BJ (cell line): ENCODE measurements at regions of chr19 and their contacts with region 1.

Region 1: GRCh38 chr19:55494172-55494761 is 6.0 kb downstream of the SSC5D start:
- DNase-seq: no peak
- H3K4me3 ChIP-seq: peak overlapping the region; percentile 39
- H3K27me3 ChIP-seq: no peaks in the 10 kb centered on the region
- CTCF ChIP-seq: no peak

Region 2: DNA sequence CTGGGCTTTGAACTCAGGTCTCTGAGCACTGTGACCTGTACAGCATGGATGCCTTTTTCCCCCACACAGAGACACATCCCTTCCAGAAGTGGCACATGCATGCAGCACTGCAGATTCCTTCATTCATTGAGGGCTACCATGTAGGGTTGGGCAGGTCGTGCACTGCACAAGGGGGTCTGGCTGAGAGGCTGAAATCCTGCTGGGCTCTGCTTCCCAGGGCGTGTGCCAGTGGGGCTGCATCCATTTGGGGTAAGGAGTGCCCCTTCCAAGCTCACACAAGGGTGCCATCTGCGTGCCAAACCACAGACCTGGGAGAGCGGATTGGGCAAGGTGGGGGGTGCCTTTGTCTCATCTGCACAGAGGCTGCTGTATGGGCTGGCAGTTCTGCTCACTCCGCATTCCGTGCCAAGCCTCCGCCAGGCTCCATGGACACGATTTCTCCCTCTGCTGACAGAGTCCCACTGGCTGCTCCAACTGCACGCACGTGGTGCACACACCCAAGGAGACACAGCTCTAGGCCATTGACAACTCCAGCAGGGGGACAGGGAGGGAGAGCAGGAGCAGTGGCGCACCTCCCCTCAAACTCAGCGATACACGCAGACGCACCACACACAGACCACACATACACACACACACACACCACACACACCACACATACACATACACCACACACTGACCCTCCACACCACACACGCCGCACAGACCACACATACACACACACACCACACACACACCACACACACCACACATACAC is 46.7 kb before region 1 on chr19:
- CTCF ChIA-PET with region 1: no interaction called
- POLR2A ChIA-PET with region 1: no interaction called
- DNase-seq: no peak
- H3K4me3 ChIP-seq: no peak overlapping the region
- H3K27me3 ChIP-seq: peaks cover 29% of the 10 kb centered on the region
- CTCF ChIP-seq: no peak

Region 3: GRCh38 chr19:55467236-55468053 is 26.8 kb before region 1 on chr19:
- CTCF ChIA-PET with region 1: interaction called, 45 read pairs
- POLR2A ChIA-PET with region 1: no interaction called
- DNase-seq: no peak
- H3K4me3 ChIP-seq: no peak overlapping the region
- H3K27me3 ChIP-seq: no peaks in the 10 kb centered on the region
- CTCF ChIP-seq: peak; percentile 82

Region 4: DNA sequence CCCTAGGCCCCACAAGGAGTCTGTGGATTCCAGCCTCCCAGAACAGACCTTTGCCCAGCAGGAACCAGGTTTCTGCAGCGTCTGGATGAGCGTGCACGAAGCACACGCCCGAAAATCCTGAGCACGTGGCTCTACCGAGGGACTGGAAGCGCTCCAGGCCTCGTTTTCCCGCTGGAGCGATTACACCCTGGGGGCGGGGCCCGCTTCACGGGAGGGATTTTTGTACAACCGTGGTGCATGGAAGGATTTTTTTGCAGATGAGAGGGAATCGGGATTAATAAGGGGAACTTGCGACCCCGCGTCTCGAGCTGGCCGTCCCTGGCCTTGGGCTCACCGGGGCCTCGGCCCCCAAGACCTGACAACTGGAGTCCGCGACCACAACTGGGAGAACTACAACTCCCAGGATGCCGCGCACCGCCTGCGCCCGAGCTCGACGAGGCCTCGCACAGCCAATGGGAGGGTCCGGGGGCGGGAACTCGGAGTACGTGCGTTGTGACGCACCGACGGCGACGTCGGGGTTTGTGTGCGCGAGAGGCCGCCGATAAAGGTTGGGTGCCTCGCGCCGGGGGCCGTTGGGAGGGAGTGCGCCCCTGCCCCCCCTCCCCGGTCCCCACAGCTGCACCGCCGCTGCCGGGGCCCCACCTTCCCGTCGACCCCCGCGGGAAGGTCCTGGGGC is 18.0 kb before region 1 on chr19 and contains the start of gene ZNF628:
- CTCF ChIA-PET with region 1: interaction called, 7 read pairs
- POLR2A ChIA-PET with region 1: interaction called, 27 read pairs
- DNase-seq: peak; percentile 74
- H3K4me3 ChIP-seq: peak within 1 kb of the TSS; percentile 58
- H3K27me3 ChIP-seq: no peaks in the 10 kb centered on the region
- CTCF ChIP-seq: no peak
- polyA plus RNA-seq, gene ZNF628: 0.36 and 0.48 TPM in 2 replicates

Region 5: GRCh38 chr19:55526216-55527196 is 32.2 kb after region 1 on chr19:
- CTCF ChIA-PET with region 1: no interaction called
- POLR2A ChIA-PET with region 1: no interaction called
- DNase-seq: no peak
- H3K4me3 ChIP-seq: no peak overlapping the region
- H3K27me3 ChIP-seq: no peaks in the 10 kb centered on the region
- CTCF ChIP-seq: no peak

Region 6: GRCh38 chr19:55549500-55550320 is 55.4 kb after region 1 on chr19:
- CTCF ChIA-PET with region 1: no interaction called
- POLR2A ChIA-PET with region 1: no interaction called
- DNase-seq: peak; percentile 92
- H3K4me3 ChIP-seq: peak overlapping the region; percentile 7
- H3K27me3 ChIP-seq: no peaks in the 10 kb centered on the region
- CTCF ChIP-seq: no peak

Region 7: DNA sequence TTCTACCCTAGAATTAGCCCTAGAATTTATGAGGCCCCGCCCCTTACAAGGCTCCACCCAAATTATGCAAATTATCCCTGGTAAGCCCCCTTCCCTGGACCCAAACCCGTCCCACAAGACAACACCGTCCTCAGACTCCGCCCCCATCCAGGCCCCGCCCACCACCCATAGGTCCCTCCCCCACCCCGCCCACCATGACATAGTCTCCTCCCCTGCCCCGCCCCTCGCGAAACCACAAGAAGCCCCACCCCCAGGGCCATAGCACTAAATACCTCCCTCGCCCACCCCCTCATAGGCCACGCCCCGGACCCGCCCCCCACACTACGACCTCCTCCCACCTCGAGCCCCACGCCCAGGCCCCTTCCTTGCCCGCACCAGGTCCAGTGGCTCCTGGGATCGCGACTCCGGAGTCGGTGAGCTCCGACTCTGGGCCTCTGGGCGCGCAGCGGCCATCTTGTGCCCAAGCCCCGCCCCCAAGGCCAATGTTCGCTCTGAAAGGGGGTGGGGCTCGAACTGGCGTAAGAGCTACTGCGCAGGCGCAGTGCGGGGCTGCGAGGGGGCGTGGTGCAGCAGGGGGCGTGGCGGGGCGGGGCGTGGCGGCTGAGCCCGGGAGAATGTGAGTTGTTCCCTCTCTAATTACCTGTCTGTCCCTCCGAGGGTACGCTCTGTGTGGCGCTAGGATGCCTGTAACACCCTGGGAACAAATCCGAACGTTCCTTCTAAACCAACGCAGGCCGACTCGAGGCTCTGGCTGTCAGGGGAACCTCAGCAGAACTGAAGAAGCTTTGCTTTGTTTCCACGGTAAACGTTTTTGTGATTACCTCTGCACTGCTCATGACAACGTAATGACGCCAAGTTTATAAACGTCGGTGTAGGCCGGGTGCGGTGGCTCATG is 130.1 kb after region 1 on chr19 and contains the start of gene ZNF784:
- CTCF ChIA-PET with region 1: no interaction called
- POLR2A ChIA-PET with region 1: no interaction called
- DNase-seq: no peak
- H3K4me3 ChIP-seq: peak within 1 kb of the TSS; percentile 82
- H3K27me3 ChIP-seq: no peaks in the 10 kb centered on the region
- CTCF ChIP-seq: no peak
- polyA plus RNA-seq, gene ZNF784: 2.9 and 4.5 TPM in 2 replicates